CD4-positive, alpha-beta memory T cell (primary cell): ENCODE measurements at regions of chr19 and their contacts with region 1.

Region 1: DNA sequence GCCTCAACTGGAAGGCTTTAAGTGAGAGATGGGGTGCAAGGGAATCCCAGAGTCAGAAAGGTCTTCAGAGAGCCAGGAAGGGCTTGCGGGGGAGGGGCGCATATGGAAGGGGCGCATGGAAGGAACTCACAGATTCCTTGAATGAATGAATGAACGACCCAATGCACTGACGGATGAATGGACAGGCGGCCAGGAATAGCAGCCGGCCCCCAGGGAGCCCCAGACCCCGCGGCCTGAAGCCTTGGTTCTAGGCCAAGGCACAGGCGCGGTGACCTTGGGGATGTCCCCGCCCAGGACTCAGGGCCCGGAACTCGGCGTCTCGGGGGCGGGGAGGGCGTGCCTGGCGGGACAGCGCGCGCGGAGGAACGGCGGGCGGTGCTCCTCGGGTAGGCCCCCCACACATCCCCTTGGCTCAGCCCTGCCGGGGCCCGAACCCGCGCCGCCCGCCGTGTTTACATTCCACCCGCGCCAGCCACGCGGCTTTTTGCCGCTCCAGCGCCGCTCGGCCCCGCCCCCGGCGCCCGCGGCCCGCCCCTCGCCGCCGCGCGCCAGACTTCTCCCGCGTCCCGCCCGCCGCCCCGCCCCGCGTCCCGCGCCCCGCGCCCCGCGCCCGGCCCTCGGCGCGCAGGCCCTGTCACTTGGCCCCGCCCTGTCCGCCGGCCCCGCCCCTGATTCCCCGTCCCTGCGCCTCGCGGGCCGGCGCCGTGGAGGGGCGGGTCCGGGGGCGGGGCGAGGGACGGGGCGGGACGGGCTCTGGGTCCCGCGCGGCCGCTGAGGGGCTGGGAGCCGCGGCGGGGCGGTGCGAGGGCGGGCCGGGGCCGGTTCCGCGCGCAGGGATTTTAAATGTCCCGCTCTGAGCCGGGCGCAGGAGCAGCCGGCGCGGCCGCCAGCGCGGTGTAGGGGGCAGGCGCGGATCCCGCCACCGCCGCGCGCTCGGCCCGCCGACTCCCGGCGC is at the start of gene CCNE1:
- DNase-seq: peak; percentile 90 to 93 (median 92)
- H3K4me3 ChIP-seq: peak within 1 kb of the TSS in 1 of 2 donors; percentile 35
- H3K4me3 Mint-ChIP-seq: peak within 1 kb of the TSS; percentile 81 to 97 (median 86)
- H3K27ac ChIP-seq: peak within 1 kb of the TSS; percentile 52
- H3K27ac Mint-ChIP-seq: peak within 1 kb of the TSS; percentile 75 to 92 (median 88)
- H3K4me1 ChIP-seq: peaks cover 10% of the 10 kb centered on the region
- H3K4me1 Mint-ChIP-seq: peaks cover 6 to 17% (median 14%) of the 10 kb centered on the region in 4 donors
- H3K27me3 ChIP-seq: no peaks in the 10 kb centered on the region
- H3K27me3 Mint-ChIP-seq: no peaks in the 10 kb centered on the region
- total RNA-seq, gene CCNE1: 2.9 to 3.4 TPM

Region 2: DNA sequence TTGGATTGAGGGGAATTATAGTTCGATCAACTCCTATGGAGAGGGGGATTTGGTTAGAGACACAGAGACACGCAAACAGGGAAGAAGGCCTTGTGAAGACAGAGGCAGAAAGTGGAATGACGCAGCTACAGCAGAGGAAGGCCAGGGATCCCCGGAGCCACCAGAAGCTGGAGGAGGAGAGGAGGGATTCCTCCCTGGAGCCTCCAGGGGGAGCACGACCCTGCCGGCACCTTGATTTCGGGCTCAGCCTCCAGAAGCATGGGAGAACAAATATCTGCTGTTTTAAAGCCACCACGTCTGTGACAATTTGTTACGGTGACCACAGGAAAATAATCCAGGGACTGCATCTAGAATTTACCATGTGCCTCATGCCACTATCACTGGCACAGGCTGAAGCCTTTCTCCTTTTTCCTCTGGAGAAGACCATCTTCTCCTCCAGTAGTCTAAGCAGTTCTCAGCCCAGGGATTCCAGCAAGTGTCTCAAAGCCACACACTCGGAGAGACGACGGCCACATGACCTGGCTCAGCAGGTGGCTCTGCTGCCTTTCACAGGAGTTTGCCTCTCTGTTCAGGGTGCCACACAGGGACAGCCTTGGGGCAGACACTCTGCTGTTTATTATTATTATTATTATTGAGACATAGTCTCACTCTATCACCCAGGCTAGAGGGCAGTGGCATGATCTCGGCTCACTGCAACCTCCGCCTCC is 39.5 kb before region 1 on chr19:
- CTCF ChIA-PET with region 1: no interaction called
- POLR2A ChIA-PET with region 1: no interaction called
- intact Hi-C with region 1: no loop called
- DNase-seq: peak in 3 of 5 donors; percentile 10 to 20 (median 13)
- H3K4me3 ChIP-seq: no peak overlapping the region
- H3K4me3 Mint-ChIP-seq: no peak overlapping the region
- H3K27ac ChIP-seq: no peak overlapping the region
- H3K27ac Mint-ChIP-seq: no peak overlapping the region
- H3K4me1 ChIP-seq: no peaks in the 10 kb centered on the region
- H3K4me1 Mint-ChIP-seq: no peaks in the 10 kb centered on the region
- H3K27me3 ChIP-seq: no peaks in the 10 kb centered on the region
- H3K27me3 Mint-ChIP-seq: no peaks in the 10 kb centered on the region

Region 3: GRCh38 chr19:29798774-29799497 is 12.5 kb before region 1 on chr19:
- CTCF ChIA-PET with region 1: no interaction called
- POLR2A ChIA-PET with region 1: no interaction called
- intact Hi-C with region 1: no loop called
- DNase-seq: no peak
- H3K4me3 ChIP-seq: no peak overlapping the region
- H3K4me3 Mint-ChIP-seq: no peak overlapping the region
- H3K27ac ChIP-seq: no peak overlapping the region
- H3K27ac Mint-ChIP-seq: peak overlapping the region in 1 of 7 donors; percentile 38
- H3K4me1 ChIP-seq: no peaks in the 10 kb centered on the region
- H3K4me1 Mint-ChIP-seq: no peaks in the 10 kb centered on the region
- H3K27me3 ChIP-seq: no peaks in the 10 kb centered on the region
- H3K27me3 Mint-ChIP-seq: no peaks in the 10 kb centered on the region

Region 4: GRCh38 chr19:29831041-29831548 is 19.7 kb after region 1 on chr19:
- CTCF ChIA-PET with region 1: no interaction called
- POLR2A ChIA-PET with region 1: interaction called, 19 read pairs
- intact Hi-C with region 1: loop called (anchors 1 kb)
- DNase-seq: peak; percentile 73 to 82 (median 81)
- H3K4me3 ChIP-seq: peak overlapping the region in 1 of 2 donors; percentile 17
- H3K4me3 Mint-ChIP-seq: peak overlapping the region; percentile 78 to 88 (median 84)
- H3K27ac ChIP-seq: peak overlapping the region; percentile 54
- H3K27ac Mint-ChIP-seq: peak overlapping the region; percentile 83 to 99 (median 96)
- H3K4me1 ChIP-seq: peaks cover 29% of the 10 kb centered on the region
- H3K4me1 Mint-ChIP-seq: peaks cover 17 to 46% (median 29%) of the 10 kb centered on the region in 4 donors
- H3K27me3 ChIP-seq: no peaks in the 10 kb centered on the region
- H3K27me3 Mint-ChIP-seq: no peaks in the 10 kb centered on the region

Region 5: DNA sequence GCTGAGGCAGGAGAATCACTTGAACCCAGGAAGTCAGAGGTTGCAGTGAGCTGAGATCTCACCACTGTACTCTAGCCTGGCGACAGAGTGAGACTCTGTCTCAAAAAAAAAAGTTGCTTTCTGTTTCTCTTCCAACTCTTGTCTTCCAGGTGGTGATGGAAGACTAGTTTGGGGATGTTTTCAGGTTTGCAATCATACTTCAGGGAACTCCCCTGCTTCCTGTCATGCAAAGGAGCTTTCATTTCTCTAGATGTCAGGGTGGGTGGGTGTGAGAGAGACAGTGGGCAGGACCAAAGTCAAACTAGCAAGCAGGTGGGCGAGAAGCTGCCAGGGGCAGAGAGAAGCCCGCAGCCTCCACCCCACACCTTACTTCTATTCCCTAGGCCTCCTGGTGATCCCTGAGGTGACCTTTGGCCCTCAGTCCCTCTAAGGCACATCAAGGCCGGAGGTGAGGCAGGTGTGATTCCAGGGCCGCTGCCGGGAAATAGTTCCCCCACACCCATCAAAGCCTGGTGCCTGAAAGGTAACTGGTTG is 26.1 kb after region 1 on chr19:
- CTCF ChIA-PET with region 1: no interaction called
- POLR2A ChIA-PET with region 1: interaction called, 52 read pairs
- intact Hi-C with region 1: no loop called
- DNase-seq: peak; percentile 50 to 77 (median 67)
- H3K4me3 ChIP-seq: no peak overlapping the region
- H3K4me3 Mint-ChIP-seq: peak overlapping the region; percentile 21 to 86 (median 72)
- H3K27ac ChIP-seq: peak overlapping the region; percentile 50
- H3K27ac Mint-ChIP-seq: peak overlapping the region; percentile 82 to 98 (median 96)
- H3K4me1 ChIP-seq: peaks cover 24% of the 10 kb centered on the region
- H3K4me1 Mint-ChIP-seq: peaks cover 9 to 45% (median 26%) of the 10 kb centered on the region in 4 donors
- H3K27me3 ChIP-seq: no peaks in the 10 kb centered on the region
- H3K27me3 Mint-ChIP-seq: peaks cover 0 to 1% of the 10 kb centered on the region in 2 donors

Region 6: GRCh38 chr19:29887442-29887855 is 76.0 kb after region 1 on chr19:
- CTCF ChIA-PET with region 1: no interaction called
- POLR2A ChIA-PET with region 1: no interaction called
- intact Hi-C with region 1: no loop called
- DNase-seq: no peak
- H3K4me3 ChIP-seq: no peak overlapping the region
- H3K4me3 Mint-ChIP-seq: no peak overlapping the region
- H3K27ac ChIP-seq: no peak overlapping the region
- H3K27ac Mint-ChIP-seq: peak overlapping the region in 1 of 7 donors; percentile 9
- H3K4me1 ChIP-seq: no peaks in the 10 kb centered on the region
- H3K4me1 Mint-ChIP-seq: peaks cover 0 to 7% (median under 1%) of the 10 kb centered on the region in 4 donors
- H3K27me3 ChIP-seq: no peaks in the 10 kb centered on the region
- H3K27me3 Mint-ChIP-seq: peaks cover 0 to 8% of the 10 kb centered on the region in 2 donors

Region 7: DNA sequence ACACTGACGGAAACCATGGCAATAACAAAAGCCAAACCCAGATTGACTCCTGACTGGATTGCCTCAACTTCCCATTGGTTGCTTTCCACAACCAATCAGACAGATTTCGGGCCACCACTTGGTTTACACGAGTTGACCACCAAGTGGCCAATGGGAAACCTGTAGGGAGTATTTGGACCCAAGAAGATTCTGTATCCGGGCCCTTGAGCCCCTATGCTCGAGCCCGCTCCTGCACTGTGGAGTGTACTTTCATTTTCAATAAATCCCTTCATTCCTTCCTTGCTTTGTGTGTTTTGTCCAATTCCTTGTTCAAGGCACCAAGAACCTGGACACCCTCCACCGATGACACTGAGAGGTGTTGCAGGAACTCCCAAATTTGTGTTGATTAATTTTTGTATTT is 106.5 kb after region 1 on chr19:
- CTCF ChIA-PET with region 1: no interaction called
- POLR2A ChIA-PET with region 1: no interaction called
- intact Hi-C with region 1: no loop called
- DNase-seq: no peak
- H3K4me3 ChIP-seq: no peak overlapping the region
- H3K4me3 Mint-ChIP-seq: no peak overlapping the region
- H3K27ac ChIP-seq: no peak overlapping the region
- H3K27ac Mint-ChIP-seq: no peak overlapping the region
- H3K4me1 ChIP-seq: no peaks in the 10 kb centered on the region
- H3K4me1 Mint-ChIP-seq: no peaks in the 10 kb centered on the region
- H3K27me3 ChIP-seq: no peaks in the 10 kb centered on the region
- H3K27me3 Mint-ChIP-seq: peaks cover 5 to 13% of the 10 kb centered on the region in 2 donors